WTC11 (cell line): ENCODE measurements at regions of chr5 and their contacts with region 1.

Region 1: GRCh38 chr5:87780831-87781760 is 368.4 kb upstream of the CCNH start:
- DNase-seq: peak; percentile 82
- ATAC-seq: peak; percentile 99
- H3K4me3 Mint-ChIP-seq: peak overlapping the region; percentile 56
- H3K27ac Mint-ChIP-seq: no peak overlapping the region
- H3K4me1 Mint-ChIP-seq: peaks cover 23% of the 10 kb centered on the region
- H3K27me3 Mint-ChIP-seq: peaks cover 41% of the 10 kb centered on the region
- CTCF ChIP-seq: peak; percentile 88

Region 2: DNA sequence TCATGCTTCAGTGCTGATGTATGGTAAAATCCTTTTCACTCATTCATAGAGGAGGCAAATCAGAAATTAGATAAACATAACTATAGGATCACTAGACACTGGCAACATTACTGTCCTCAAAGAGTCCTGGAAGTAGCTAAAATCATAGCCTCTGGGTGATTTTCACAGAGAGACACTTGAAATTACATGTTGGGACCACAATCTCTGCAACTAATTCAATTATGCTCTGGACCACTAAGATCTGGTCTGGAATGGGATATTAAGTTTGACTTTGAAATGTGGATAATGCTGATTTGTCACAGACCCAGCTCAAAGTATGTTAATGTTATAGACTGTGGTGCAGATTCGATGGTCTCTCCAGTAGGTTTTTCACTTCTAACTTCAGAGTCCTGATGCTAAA is 153.7 kb before region 1 on chr5:
- CTCF ChIA-PET with region 1: no interaction called
- POLR2A ChIA-PET with region 1: no interaction called
- DNase-seq: no peak
- ATAC-seq: no peak
- H3K4me3 Mint-ChIP-seq: no peak overlapping the region
- H3K27ac Mint-ChIP-seq: no peak overlapping the region
- H3K4me1 Mint-ChIP-seq: peaks cover 2% of the 10 kb centered on the region; the same call in 1 of the 2 replicates
- H3K27me3 Mint-ChIP-seq: no peaks in the 10 kb centered on the region
- CTCF ChIP-seq: no peak

Region 3: DNA sequence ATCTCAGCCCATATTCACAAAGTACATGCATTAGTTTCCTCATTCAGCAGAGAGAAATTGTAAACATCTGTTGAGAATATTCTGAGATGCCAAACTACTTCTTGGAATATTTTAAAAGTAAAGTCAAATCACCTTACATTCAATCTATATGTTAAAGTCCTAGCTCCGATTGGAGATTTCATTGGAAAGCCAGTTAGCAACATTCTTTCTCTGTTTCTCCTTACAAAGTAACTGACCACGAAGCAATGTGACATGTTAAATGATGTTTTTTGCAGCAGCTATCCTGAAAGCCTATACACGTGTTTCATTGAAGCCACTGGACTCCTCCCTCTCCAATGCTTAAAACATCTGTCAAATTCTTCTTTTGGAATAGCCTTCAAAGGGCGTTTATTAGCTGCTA is 10.8 kb after region 1 on chr5:
- CTCF ChIA-PET with region 1: interaction called, 10 read pairs
- POLR2A ChIA-PET with region 1: no interaction called
- DNase-seq: no peak
- ATAC-seq: no peak
- H3K4me3 Mint-ChIP-seq: no peak overlapping the region
- H3K27ac Mint-ChIP-seq: no peak overlapping the region
- H3K4me1 Mint-ChIP-seq: peaks cover 20% of the 10 kb centered on the region
- H3K27me3 Mint-ChIP-seq: peaks cover 67% of the 10 kb centered on the region
- CTCF ChIP-seq: no peak

Region 4: DNA sequence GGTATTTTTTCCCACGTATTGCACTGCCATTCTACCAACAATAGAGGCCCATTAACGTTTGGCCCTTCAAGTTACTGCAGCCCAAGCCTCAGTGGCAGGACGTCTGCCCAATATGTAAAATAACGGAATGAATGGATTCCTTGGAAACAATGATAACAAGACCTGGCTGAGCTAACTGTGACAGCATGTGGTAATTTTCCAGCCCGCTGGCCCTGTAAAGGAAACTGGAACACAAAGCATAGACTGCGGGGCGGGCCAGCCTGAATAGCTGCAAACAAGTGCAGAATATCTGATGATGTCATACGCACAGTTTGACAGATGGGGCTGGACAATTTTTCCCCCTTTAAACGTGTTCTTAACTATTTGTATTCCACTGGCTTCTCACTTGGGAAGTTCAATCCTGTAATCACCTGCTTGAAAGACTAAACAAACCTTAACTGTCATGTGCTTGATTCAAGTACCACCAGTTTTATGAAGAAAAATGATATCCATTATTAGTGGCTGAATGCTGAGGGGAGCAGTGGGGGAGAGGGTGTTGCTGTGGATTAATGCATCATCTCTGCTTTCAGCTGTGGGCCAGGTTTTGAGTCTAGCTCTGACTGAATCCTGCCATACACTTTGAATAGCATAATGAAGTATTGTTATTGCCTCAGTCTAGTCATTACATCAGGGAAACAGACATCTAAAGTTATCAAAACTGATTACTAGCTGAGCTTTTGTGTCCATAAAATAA is 163.6 kb after region 1 on chr5:
- CTCF ChIA-PET with region 1: no interaction called
- POLR2A ChIA-PET with region 1: no interaction called
- DNase-seq: peak; percentile 60
- ATAC-seq: peak; percentile 96
- H3K4me3 Mint-ChIP-seq: no peak overlapping the region
- H3K27ac Mint-ChIP-seq: peak overlapping the region; percentile 50
- H3K4me1 Mint-ChIP-seq: peaks cover 43% of the 10 kb centered on the region
- H3K27me3 Mint-ChIP-seq: no peaks in the 10 kb centered on the region
- CTCF ChIP-seq: no peak

Region 5: DNA sequence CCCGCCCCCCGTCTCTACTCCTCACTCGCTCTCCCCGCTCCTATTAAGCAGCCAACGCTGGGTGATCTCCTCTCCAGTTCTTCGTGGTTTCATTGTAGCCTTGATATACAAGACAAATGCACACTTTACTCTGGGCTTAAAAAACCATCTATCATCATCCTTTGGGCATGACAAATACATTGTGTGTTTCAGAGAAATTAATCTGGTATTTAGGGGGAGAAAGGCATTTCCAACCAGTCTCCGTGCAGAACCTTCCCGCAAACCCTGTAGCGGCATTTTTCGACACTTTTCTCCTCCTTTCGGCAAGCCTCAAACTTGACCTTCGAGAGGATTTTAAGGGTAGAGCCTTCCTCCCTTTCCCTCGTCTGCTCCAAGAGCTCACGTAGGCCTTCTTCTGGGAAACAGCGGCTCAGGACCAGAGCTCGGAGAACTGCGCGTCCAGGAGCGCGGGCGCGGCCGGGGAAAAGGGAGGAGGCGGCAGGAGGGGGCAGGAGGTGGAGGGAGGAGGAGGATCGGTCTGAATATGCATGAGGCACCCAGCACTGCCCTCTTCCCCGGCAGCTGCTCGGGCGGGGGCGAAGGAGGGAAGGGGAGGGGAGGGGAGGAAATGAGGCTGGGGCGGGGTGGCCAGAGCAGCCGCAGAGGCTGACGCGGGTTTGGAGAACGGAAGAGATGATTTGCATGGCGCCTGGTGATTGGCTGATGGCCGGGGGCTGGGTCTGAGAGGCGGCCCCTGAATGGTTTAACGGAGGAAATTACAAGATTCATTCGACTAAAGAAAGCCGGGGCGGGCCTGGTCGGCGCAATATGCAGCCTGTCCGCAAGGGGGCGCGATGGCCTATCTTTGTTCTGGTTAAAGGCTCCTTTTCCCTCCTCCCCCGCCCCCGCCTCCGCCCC is 360.0 kb after region 1 on chr5:
- CTCF ChIA-PET with region 1: interaction called, 12 read pairs
- POLR2A ChIA-PET with region 1: no interaction called
- DNase-seq: peak; percentile 99
- ATAC-seq: peak; percentile 89
- H3K4me3 Mint-ChIP-seq: no peak overlapping the region
- H3K27ac Mint-ChIP-seq: no peak overlapping the region
- H3K4me1 Mint-ChIP-seq: peaks cover 12% of the 10 kb centered on the region; the same call in 1 of the 2 replicates
- H3K27me3 Mint-ChIP-seq: peaks cover 7% of the 10 kb centered on the region; the same call in 1 of the 2 replicates
- CTCF ChIP-seq: peak; percentile 82

Region 6: DNA sequence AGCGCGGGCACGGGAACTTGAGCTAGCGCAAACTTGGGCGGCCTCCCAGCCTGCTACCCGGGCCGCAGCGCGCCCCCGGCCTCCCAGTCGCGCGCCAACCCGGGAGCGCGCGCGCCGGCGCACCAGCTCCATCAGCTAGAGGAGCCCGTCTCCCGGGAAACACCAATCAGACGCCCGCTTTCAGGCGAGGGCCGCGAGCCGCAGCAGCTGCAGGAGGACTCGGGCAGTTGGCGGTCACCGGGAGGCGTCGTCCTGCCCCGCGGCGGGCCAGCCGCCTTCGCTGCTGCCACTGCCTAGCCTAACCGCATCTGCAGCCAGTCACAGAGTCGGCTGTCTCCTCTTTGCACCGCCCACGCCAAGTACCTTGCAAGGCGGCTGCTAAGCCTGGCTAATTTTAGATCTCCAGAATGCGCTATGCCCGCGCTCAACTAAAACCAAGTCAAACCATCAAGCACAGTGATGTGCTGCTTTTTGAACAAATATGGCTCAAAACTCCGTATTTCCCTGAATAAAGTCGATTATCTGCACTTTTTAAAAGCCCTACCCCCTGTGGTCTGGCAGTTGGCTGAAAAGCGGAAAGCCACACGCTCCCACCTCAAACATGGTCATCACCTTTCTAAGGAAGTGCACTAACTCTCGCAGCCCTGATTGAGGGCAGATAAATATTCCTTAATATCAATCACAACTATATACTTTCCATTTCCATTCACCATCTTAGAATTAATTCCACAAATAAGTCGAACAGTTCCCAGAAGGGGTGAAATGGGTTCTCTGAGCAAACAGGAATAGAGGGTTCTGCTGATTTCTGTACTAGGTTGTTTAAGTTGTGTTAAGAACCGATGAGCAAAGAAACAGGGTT is 880.1 kb after region 1 on chr5:
- CTCF ChIA-PET with region 1: interaction called, 20 read pairs
- POLR2A ChIA-PET with region 1: no interaction called
- DNase-seq: peak; percentile 97
- ATAC-seq: peak; percentile 90
- H3K4me3 Mint-ChIP-seq: peak overlapping the region; percentile 63
- H3K27ac Mint-ChIP-seq: peak overlapping the region; percentile 59
- H3K4me1 Mint-ChIP-seq: peaks cover 60% of the 10 kb centered on the region
- H3K27me3 Mint-ChIP-seq: peaks cover 85% of the 10 kb centered on the region
- CTCF ChIP-seq: no peak

Region 7: GRCh38 chr5:88690409-88691229 is 909.5 kb after region 1 on chr5:
- CTCF ChIA-PET with region 1: interaction called, 50 read pairs
- POLR2A ChIA-PET with region 1: interaction called, 3 read pairs
- DNase-seq: peak; percentile 76
- ATAC-seq: peak; percentile 12
- H3K4me3 Mint-ChIP-seq: peak overlapping the region; percentile 67
- H3K27ac Mint-ChIP-seq: no peak overlapping the region
- H3K4me1 Mint-ChIP-seq: peaks cover 80% of the 10 kb centered on the region
- H3K27me3 Mint-ChIP-seq: peaks cover 100% of the 10 kb centered on the region
- CTCF ChIP-seq: peak; percentile 98

Region 8: GRCh38 chr5:88724201-88724600 is 943.1 kb after region 1 on chr5:
- CTCF ChIA-PET with region 1: interaction called, 34 read pairs
- POLR2A ChIA-PET with region 1: no interaction called
- DNase-seq: no peak
- ATAC-seq: no peak
- H3K4me3 Mint-ChIP-seq: no peak overlapping the region
- H3K27ac Mint-ChIP-seq: no peak overlapping the region
- H3K4me1 Mint-ChIP-seq: peaks cover 18% of the 10 kb centered on the region
- H3K27me3 Mint-ChIP-seq: peaks cover 19% of the 10 kb centered on the region
- CTCF ChIP-seq: no peak